Ovary (tissue), 10 donors: ENCODE measurements at regions of chr5 and their contacts with region 1.

Region 1: DNA sequence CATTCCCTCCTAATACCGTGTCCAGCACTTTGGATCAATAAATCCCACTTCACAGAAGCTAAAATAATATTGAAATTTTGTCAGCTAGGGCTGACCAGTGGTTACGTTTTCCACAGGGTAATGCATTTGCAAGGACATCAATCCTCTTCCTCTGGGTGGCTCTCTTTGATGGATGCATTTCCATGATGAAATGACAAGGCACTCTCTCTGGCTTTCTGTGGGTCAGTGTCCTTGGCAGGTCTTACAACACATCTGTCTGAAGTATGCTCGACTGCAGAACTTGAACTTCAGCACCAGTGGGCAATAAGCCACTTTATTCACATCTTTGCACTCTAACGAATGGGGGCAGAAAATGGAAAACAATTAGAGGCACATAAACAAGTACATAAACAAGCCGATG is 330.1 kb downstream of the ADAMTS6 start:
- DNase-seq: no peak
- H3K4me3 ChIP-seq: no peak overlapping the region
- H3K27ac ChIP-seq: no peak overlapping the region
- H3K4me1 ChIP-seq: peaks cover 10% of the 10 kb centered on the region
- H3K27me3 ChIP-seq: no peaks in the 10 kb centered on the region
- CTCF ChIP-seq: no peak
- EP300 ChIP-seq: no peak
- POLR2A ChIP-seq: no peak

Region 2: DNA sequence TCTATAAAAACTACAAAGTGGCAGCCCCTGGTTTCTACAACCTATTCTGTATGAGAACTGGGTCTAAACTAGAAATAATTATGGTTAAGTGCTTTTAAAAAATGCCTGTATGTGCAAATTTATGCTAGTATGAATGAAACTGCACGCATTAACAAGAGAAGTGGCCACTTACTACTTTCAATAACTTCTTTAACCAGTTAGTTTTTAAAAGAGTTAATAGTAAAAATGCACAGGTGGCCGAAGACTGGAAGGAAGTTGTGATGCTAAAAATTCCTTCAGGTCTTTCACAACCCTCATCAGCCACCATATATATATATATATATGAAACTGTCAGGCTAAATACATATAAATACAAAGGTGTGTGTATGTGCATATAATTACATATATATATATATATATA is 424.5 kb before region 1 on chr5:
- intact Hi-C with region 1: loop called in 1 of 4 experiments (anchors 5 kb)
- DNase-seq: no peak
- H3K4me3 ChIP-seq: no peak overlapping the region
- H3K27ac ChIP-seq: no peak overlapping the region
- H3K4me1 ChIP-seq: no peaks in the 10 kb centered on the region
- H3K27me3 ChIP-seq: no peaks in the 10 kb centered on the region
- CTCF ChIP-seq: no peak
- EP300 ChIP-seq: no peak
- POLR2A ChIP-seq: no peak

Region 3: DNA sequence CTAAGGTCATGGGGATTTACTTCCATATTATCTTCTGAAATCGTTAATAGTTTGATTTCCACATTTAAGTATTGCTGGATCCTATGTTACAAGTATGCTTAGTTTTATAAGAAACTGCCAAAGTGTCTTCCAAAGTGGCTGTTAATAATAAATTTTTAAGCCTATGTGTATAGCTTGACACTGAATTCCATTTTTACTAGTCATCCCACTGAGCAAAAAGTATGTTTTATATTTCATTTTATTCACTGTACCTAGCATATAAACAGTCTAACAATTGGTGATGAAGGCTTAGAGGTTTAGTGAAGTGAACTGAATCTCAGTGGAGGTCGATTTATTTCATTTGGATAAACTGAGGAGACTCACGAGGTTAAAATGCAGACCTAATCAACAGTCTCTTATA is 155.5 kb after region 1 on chr5:
- intact Hi-C with region 1: no loop called
- DNase-seq: no peak
- H3K4me3 ChIP-seq: no peak overlapping the region
- H3K27ac ChIP-seq: no peak overlapping the region
- H3K4me1 ChIP-seq: no peaks in the 10 kb centered on the region
- H3K27me3 ChIP-seq: no peaks in the 10 kb centered on the region
- CTCF ChIP-seq: no peak
- EP300 ChIP-seq: no peak
- POLR2A ChIP-seq: no peak